Activated CD4-positive, alpha-beta T cell treated with anti-CD3 and anti-CD28 coated beads, Interleukin-2, amount 10 ng/mL, durations not matched to agents 24 days and 14 days (primary cell): ENCODE measurements at regions of chr13 and their contacts with region 1.

Region 1: DNA sequence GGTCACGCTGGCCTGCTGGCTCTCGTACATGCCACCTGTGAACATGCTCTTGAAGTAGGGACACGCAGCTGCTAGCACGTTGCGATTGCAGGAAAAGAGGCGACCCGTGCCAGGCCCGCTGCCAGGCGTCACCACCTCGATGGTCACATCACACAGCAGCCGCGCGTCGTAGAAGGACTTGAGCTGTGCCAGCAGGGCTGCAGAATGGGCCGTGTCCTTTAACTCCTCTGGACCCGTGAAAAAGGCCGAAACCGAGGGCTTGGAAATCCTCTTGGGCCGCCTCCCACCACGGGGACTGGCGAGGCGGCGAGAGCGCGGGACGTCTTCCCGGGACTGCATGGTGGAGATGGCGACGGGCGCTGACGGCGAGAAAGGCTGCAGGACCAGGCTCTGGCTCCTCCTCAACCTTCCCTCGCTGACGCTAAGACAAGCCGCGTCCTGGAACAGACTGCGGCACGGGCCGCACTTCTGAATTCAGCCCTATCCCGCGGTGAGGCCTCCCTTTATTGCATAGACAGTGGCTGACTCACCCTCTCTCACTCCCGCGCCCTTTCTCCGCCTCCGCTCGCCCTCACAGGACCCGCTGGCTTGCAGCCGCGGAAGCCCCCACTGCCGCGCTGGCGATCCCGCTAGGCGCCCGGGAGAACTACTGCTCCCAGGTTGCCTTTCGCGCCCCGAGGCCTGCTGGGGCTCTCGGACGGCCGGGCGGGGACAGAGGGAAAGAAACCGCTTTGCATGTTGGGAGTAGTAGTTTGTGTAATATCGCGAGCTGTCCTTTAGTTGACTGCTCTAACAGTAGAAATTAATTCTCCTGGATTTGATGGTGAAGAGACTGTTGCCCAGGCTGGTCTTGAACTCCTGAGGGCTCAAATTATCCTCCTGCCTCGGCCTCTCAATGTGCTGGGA is at the start of gene KBTBD7:
- DNase-seq: peak; percentile 97
- H3K4me3 Mint-ChIP-seq: peak within 1 kb of the TSS; percentile 90
- H3K27ac Mint-ChIP-seq: peak within 1 kb of the TSS; percentile 95
- H3K4me1 Mint-ChIP-seq: peaks cover 40% of the 10 kb centered on the region
- H3K27me3 Mint-ChIP-seq: no peaks in the 10 kb centered on the region
- total RNA-seq, gene KBTBD7: 5.6 and 6.2 TPM in 2 replicates

Region 2: DNA sequence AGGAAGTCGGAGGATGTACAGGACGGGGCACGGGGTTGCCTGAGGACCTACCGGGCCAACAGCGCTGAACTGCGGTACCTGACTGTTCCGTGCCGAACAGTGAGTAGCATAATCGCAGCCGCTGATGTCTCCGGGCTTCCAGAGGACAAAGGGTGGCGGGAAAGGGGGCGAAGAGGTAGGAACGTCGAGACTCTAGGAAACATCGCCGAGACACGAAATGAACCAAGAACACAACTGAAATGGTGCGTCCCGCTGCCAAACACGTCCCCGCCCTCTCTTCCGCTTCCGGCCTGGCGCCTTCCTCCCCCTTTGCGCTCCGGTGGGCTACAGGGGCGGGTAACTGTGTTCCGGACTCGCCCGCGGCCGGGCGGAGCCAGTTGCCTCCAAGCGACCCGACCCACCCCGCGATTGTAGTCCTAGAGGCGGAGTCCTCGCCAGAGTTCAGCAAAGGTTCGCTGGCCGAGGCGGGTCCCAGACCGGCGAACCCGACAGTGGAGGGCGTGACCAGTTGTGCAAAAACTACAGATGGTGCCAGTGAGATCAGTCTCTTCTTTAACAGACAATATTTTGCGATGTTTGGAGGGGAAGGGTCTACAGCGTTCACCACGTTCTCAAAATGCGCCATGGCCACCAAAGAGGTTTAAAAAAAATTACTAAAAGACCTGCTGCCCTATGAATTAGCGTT is 423.1 kb before region 1 on chr13 and contains the start of gene MRPS31:
- intact Hi-C with region 1: loop called (anchors 10 kb)
- DNase-seq: peak; percentile 98
- H3K4me3 Mint-ChIP-seq: peak within 1 kb of the TSS; percentile 98
- H3K27ac Mint-ChIP-seq: peak within 1 kb of the TSS; percentile 98
- H3K4me1 Mint-ChIP-seq: peaks cover 30% of the 10 kb centered on the region
- H3K27me3 Mint-ChIP-seq: no peaks in the 10 kb centered on the region
- total RNA-seq, gene MRPS31: 46.3 TPM in 2 replicates

Region 3: DNA sequence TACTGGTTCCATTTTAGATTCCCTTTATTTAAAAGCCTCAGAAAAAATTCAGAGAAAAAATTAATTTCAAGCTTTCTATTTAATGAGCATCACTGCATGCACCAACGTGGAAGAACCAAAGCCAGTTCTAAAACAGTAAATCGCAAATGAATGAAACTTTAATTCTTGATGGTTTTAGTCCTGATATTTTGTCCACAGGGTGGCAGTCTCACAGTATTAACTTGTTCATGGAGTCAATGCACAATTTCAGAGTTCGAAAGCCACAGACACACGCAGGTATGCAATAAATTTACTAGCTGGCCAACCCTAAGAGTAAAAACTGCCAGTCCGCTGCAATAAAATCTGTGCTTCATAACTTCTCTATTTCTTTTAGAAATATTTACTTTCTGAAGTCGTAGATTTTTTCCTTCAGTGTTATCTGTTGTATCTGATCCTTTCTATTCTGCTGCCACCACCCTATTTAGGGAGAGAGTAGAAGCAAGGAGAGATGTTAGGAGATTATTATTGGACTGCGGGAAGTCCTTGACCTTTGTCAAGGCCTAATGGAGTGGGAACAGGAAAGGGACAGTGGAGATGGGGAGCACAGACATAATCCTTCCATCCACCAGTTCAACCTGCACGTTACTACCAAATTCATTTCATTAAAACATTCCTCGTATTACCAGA is 139.8 kb before region 1 on chr13:
- intact Hi-C with region 1: loop called (anchors 2 kb)
- DNase-seq: peak; percentile 85
- H3K4me3 Mint-ChIP-seq: no peak overlapping the region
- H3K27ac Mint-ChIP-seq: no peak overlapping the region
- H3K4me1 Mint-ChIP-seq: peaks cover 47% of the 10 kb centered on the region
- H3K27me3 Mint-ChIP-seq: no peaks in the 10 kb centered on the region

Region 4: GRCh38 chr13:41263261-41264027 is 69.3 kb after region 1 on chr13 and contains the start of gene MTRF1:
- intact Hi-C with region 1: loop called (anchors 1 kb)
- DNase-seq: peak; percentile 94
- H3K4me3 Mint-ChIP-seq: peak within 1 kb of the TSS; percentile 98
- H3K27ac Mint-ChIP-seq: peak within 1 kb of the TSS; percentile 100
- H3K4me1 Mint-ChIP-seq: peaks cover 8% of the 10 kb centered on the region
- H3K27me3 Mint-ChIP-seq: no peaks in the 10 kb centered on the region
- total RNA-seq, gene MTRF1: 20.1 and 20.6 TPM in 2 replicates

Region 5: DNA sequence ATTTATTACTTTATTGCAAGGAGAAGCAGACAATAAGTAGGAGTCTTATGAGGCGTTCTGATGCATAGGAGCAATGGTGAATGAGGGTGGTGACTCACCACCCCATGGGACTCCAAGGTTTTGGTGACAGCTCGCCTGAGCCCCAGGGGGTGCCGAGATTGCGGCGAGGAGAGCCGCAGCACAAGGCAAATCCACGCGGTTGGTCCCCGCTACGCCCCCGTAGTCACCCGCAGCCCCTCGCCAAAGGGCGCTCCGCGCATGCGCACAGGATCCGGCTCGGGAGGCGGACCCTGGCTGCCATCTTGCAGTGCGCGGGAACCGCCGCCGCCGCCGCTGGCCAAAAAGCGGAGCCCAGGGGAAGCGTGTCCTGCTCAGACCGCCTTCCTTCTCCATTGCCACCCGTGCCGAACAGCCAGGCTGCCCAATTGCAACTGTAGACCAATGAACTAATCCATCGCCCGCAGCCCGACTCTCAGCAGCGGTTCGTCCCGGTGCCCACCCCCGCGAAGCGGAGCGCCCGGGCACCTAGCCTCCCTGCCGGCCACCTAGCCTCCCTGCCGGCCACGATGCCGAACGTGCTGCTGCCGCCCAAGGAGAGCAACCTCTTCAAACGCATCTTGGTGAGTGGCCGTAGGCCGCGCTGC is 116.9 kb after region 1 on chr13 and contains the start of gene NAA16:
- intact Hi-C with region 1: loop called (anchors 2 kb)
- DNase-seq: peak; percentile 98
- H3K4me3 Mint-ChIP-seq: peak within 1 kb of the TSS; percentile 94
- H3K27ac Mint-ChIP-seq: peak within 1 kb of the TSS; percentile 93
- H3K4me1 Mint-ChIP-seq: peaks cover 37% of the 10 kb centered on the region
- H3K27me3 Mint-ChIP-seq: no peaks in the 10 kb centered on the region
- total RNA-seq, gene NAA16: 30.3 and 31.2 TPM in 2 replicates